HepG2 (cell line): ENCODE measurements at regions of chr19 and their contacts with region 1.

Region 1: DNA sequence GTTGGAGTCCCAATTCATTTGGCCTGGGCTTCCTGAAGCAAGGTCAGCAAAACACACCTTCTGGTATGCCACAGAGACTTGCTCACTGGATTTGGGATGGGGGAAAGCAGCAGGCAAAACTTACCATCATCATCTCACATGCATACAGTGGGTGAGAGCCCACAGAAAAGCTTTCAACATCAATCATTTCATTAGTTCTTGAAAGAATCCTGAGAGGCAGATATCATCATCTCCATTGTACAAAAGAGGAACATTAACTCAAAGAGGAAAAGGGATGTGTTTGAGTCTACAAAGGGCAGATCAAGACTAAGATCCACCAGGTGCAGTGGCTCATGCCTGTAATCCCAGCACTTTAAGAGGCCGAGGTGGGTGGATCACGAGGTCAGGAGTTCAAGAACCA is 6.4 kb downstream of the WDR87 start:
- DNase-seq: no peak
- ATAC-seq: no peak
- H3K4me3 ChIP-seq: no peak overlapping the region
- H3K27ac ChIP-seq: no peak overlapping the region
- H3K4me1 ChIP-seq: no peaks in the 10 kb centered on the region
- H3K27me3 ChIP-seq: peaks cover 0 to 3% of the 10 kb centered on the region in 2 experiments; a peak in 1 of 5 replicates
- CTCF ChIP-seq: no peak
- EP300 ChIP-seq: no peak
- POLR2A ChIP-seq: no peak
- RAD21 ChIP-seq: no peak

Region 2: DNA sequence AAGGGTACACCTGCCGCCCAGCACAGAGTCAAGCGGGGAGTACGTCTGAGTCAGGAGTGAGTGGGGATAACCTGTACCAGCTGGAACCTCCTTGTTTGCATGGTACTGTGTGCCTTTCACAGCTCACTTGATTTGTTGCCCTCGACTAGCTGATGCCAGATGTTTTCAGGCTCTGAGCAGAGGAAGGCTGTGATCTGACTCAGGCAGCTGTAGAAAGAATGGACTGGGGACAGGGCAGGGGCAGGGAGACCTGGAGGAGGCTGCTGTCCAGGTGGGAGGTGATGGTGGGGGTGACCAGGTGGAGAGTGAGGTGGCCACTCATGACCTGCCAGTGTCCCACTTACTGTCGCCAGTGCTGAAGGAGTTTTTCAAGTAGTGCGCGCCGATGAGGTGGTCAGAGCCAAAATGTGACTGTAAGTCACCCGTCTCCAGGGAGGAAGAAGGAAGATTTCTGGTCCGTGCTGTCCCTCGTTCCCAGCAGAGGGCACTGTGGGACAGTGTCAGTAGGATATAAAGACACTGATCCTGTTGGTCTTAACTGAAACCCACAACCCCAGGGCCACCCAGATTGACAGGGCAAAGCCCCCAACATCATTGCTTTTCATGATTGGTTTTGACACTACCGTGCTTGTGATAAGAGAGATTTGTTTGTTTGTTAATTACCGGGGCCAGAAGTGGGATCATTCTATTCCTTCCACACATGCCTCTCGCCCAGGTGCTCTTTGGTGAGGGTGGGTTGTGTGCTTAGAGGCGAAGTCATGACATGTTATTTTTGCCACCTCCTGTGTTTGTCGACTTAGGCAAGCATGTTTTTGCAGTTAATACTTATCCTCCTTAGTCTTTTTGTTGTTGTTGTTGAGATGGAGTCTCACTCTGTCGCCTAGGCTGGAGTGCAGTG is 195.7 kb after region 1 on chr19:
- CTCF ChIA-PET with region 1: interaction called, 11 read pairs
- POLR2A ChIA-PET with region 1: no interaction called
- in situ Hi-C with region 1: no loop called
- intact Hi-C with region 1: loop called (anchors 1 kb)
- DNase-seq: peak; percentile 46
- ATAC-seq: peak; percentile 85
- H3K4me3 ChIP-seq: no peak overlapping the region
- H3K27ac ChIP-seq: no peak overlapping the region
- H3K4me1 ChIP-seq: no peaks in the 10 kb centered on the region
- H3K27me3 ChIP-seq: no peaks in the 10 kb centered on the region
- CTCF ChIP-seq: peak; percentile 78
- EP300 ChIP-seq: no peak
- POLR2A ChIP-seq: no peak
- RAD21 ChIP-seq: no peak

Region 3: DNA sequence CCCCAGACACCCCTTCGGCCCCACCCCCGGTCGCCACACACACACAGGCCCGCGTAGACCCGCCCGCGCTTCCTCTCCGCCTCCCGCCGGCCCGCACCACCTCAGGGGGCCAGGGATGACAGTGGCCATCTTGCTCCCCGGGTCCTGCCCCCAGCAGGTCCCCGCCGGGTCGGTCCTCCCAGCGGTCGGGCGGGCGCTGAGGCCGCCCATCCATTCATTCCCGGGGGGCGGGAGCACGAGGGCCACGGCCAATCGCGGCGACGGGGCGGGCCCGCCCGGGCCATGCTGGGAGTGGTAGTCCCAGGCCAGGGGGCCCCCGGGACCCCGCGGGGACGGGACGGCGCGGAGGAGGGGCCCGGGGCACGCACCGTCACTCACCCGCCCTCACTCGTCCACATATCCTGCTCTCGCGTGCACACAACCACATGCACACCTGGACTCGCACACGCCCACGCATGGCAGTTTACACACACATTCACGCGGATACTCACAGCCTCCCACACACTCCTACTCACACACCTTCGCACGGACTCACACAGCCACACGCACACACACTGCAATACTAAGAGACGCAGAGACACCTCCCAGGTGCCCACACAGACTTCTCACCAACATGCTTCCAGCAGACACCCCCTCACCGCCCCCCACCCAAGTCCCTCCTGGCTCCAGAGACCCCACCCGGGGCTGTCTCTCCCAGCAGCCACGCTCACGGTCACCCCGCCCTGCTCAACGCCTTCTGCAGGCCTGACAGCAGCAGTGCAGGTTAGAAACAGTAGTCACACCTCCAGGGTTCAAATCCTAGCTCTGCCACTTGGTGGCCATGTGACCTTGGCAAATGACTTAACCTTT is 324.3 kb after region 1 on chr19 and contains the start of gene DPF1:
- CTCF ChIA-PET with region 1: no interaction called
- POLR2A ChIA-PET with region 1: no interaction called
- in situ Hi-C with region 1: no loop called
- intact Hi-C with region 1: loop called (anchors 2 kb)
- DNase-seq: peak; percentile 78
- ATAC-seq: peak; percentile 96
- H3K4me3 ChIP-seq: peak within 1 kb of the TSS; percentile 62 to 86 (median 75)
- H3K27ac ChIP-seq: no peak within 1 kb of the TSS
- H3K4me1 ChIP-seq: peaks cover 17% of the 10 kb centered on the region
- H3K27me3 ChIP-seq: peaks cover 7 to 22% of the 10 kb centered on the region in 2 experiments; a peak in 4 of 5 replicates
- CTCF ChIP-seq: peak; percentile 51
- EP300 ChIP-seq: no peak
- POLR2A ChIP-seq: peak; percentile 42 to 49; a peak in 2 of 4 replicates
- RAD21 ChIP-seq: no peak
- total RNA-seq, gene DPF1: 1.7 and 3.2 TPM in 2 replicates